ENCODE measurements at regions of chr5 and their contacts with region 1.

Region 1: DNA sequence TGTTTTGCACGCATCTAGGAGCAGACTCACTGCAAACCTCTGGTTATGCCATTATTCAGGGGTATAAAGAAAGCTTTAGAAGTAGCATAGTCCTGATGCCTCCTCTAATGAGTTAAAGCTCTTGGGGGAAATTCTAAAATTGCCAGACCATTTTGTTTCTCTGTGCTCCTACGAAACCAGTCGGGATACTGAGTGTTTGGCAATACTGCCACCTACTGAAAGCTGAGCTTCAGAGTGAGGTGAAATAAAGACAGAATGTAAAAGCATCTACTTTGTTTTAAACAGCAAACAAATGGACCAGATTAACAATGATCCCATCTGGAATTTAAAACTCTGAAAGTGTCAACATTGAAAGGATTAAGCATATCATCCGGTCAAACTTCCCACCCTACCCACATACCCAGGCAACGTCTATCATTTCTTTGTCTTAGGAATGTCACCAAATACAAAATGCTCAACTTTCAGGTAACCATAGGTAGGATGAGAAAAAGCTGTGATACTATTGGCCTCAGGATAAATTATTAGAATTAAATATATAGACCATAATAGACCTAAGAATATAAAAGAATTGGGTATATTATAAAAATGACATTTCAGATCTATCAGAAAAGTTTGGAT is 77.8 kb upstream of the SHISAL2B start:
- DNase-seq: peak; percentile 39
- ATAC-seq: peak; percentile 75
- H3K4me3 ChIP-seq: no peak overlapping the region
- H3K27ac ChIP-seq: no peak overlapping the region
- H3K4me1 ChIP-seq: no peaks in the 10 kb centered on the region
- H3K27me3 ChIP-seq: 0 out of 5 replicates have a peak, but pooled peaks cover 0 to 4% of the 10 kb centered on the region in 2 experiments
- CTCF ChIP-seq: peak; percentile 79
- EP300 ChIP-seq: no peak
- POLR2A ChIP-seq: no peak
- RAD21 ChIP-seq: peak; percentile 33; the same call in 1 of the 2 replicates

Region 2: DNA sequence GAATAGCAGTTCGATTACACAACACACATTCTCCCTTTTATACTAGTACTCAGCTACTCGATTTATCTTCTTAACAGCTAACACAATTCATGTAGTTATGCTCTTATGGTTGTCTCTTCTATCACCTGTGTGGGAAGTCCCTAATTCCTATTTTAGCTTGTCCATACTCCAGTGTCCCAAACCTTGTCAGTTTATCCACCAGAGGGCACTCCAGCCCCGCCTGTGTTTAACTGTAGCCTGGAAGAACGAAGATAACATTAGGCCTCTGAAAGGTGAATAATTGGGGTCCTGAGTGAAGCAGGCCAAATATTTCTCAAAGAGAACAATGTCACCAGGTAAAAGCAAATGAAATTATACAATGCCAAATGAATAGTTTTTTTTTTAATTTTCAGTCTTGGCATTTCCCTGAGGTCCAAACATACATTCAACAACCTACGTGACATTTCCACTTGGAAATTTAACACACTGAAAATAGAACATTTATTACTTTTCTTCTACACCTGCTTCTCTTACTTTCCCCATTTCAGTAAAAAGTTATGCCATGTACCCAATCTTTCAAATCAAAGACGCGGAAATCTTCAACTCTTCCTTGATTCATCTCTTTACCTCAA is 1210.9 kb before region 1 on chr5:
- CTCF ChIA-PET with region 1: no interaction called
- POLR2A ChIA-PET with region 1: no interaction called
- in situ Hi-C with region 1: no loop called
- intact Hi-C with region 1: loop called (anchors 10 kb)
- DNase-seq: peak; percentile 35
- ATAC-seq: peak; percentile 92
- H3K4me3 ChIP-seq: no peak overlapping the region
- H3K27ac ChIP-seq: no peak overlapping the region
- H3K4me1 ChIP-seq: no peaks in the 10 kb centered on the region
- H3K27me3 ChIP-seq: no peaks in the 10 kb centered on the region
- CTCF ChIP-seq: peak; percentile 73
- EP300 ChIP-seq: no peak
- POLR2A ChIP-seq: no peak
- RAD21 ChIP-seq: 0 out of 2 replicates have a peak, but pooled peaks have one; percentile 27

Region 3: GRCh38 chr5:64147849-64148441 is 464.5 kb before region 1 on chr5:
- CTCF ChIA-PET with region 1: interaction called, 7 read pairs
- POLR2A ChIA-PET with region 1: no interaction called
- in situ Hi-C with region 1: no loop called
- intact Hi-C with region 1: loop called (anchors 5 kb)
- DNase-seq: peak; percentile 7
- ATAC-seq: peak; percentile 80
- H3K4me3 ChIP-seq: no peak overlapping the region
- H3K27ac ChIP-seq: no peak overlapping the region
- H3K4me1 ChIP-seq: no peaks in the 10 kb centered on the region
- H3K27me3 ChIP-seq: no peaks in the 10 kb centered on the region
- CTCF ChIP-seq: peak; percentile 79
- EP300 ChIP-seq: no peak
- POLR2A ChIP-seq: no peak
- RAD21 ChIP-seq: peak; percentile 56; the same call in 1 of the 2 replicates

Region 4: GRCh38 chr5:64229163-64229774 is 383.2 kb before region 1 on chr5:
- CTCF ChIA-PET with region 1: interaction called, 12 read pairs
- POLR2A ChIA-PET with region 1: no interaction called
- in situ Hi-C with region 1: loop called (anchors 5 kb)
- intact Hi-C with region 1: loop called (anchors 1 kb)
- DNase-seq: peak; percentile 20
- ATAC-seq: peak; percentile 68
- H3K4me3 ChIP-seq: no peak overlapping the region
- H3K27ac ChIP-seq: no peak overlapping the region
- H3K4me1 ChIP-seq: no peaks in the 10 kb centered on the region
- H3K27me3 ChIP-seq: no peaks in the 10 kb centered on the region
- CTCF ChIP-seq: peak; percentile 64
- EP300 ChIP-seq: no peak
- POLR2A ChIP-seq: no peak
- RAD21 ChIP-seq: 0 out of 2 replicates have a peak, but pooled peaks have one; percentile 14

Region 5: DNA sequence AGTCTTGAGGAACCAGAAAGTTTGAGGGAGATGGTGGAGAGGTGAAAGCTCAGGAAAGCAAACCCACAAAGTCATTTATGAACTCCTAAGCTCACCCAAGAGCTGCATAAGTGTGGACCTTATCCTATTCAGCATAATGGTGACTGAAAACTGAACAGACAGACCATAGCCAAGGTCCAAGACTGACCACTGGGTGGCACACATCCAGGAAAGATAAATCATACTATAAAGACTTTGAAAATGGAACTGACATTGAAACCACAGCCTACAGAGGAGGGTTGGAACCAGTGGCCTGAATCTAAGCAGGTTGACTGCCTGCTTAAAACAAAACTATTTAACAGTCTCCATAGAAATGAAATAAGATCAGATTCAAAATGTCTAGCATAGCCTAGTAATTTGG is 227.7 kb before region 1 on chr5:
- CTCF ChIA-PET with region 1: interaction called, 23 read pairs
- POLR2A ChIA-PET with region 1: no interaction called
- in situ Hi-C with region 1: loop called (anchors 5 kb)
- intact Hi-C with region 1: loop called (anchors 1 kb)
- DNase-seq: peak; percentile 12
- ATAC-seq: peak; percentile 93
- H3K4me3 ChIP-seq: no peak overlapping the region
- H3K27ac ChIP-seq: no peak overlapping the region
- H3K4me1 ChIP-seq: no peaks in the 10 kb centered on the region
- H3K27me3 ChIP-seq: no peaks in the 10 kb centered on the region
- CTCF ChIP-seq: peak; percentile 57
- EP300 ChIP-seq: no peak
- POLR2A ChIP-seq: no peak
- RAD21 ChIP-seq: no peak